Activated B cell treated with CpG ODN at 0.5 μM for 24 hours (primary cell): ENCODE measurements at regions of chr1 and their contacts with region 1.

Region 1: GRCh38 chr1:155208541-155209311 is at the start of gene MTX1:
- DNase-seq: peak; percentile 85
- ATAC-seq: peak; percentile 81
- H3K4me3 Mint-ChIP-seq: peak within 1 kb of the TSS; percentile 85
- H3K27ac Mint-ChIP-seq: peak within 1 kb of the TSS; percentile 91
- H3K4me1 Mint-ChIP-seq: peaks cover 20% of the 10 kb centered on the region
- H3K27me3 Mint-ChIP-seq: no peaks in the 10 kb centered on the region
- CTCF ChIP-seq: no peak
- total RNA-seq, gene MTX1: 36.7 and 38.2 TPM in 2 replicates

Region 2: DNA sequence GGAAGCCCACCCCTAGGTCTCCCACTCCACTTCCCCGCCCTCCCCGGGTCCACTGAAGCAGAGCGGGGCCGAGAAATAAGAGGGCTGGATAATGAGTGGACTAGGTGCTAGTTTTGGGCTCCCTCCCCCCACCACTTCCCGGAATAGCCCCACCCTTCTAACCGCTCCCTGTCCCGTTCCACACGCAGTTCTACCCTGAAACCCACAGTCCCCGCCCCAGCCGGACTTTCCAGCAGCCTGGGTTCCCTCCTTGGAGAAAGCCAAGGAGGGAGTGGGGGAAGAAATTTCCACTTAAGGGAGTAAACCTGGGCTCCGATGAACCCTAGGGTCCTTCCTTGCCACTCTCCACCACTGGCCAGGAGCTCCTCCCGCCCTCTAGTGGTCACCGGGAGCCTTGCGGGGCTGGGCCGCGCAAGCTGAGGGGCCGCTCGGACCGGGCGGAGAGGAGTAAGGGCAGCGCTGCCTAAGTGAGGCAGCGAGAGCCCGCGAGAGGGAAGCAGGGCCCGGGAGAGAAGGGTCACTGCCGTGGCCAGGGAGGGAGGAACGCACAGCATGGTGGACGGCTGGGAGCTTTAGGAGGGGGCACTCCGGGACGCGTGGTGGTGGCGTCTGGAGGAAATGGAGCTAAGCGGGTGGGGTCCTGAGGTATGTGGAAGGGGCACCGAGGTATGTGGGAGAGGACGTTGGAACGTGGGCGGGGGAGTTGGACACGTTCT is 15.3 kb before region 1 on chr1:
- CTCF ChIA-PET with region 1: interaction called, 14 read pairs
- POLR2A ChIA-PET with region 1: interaction called, 24 read pairs
- intact Hi-C with region 1: loop called (anchors 2 kb)
- DNase-seq: peak; percentile 81
- ATAC-seq: peak; percentile 73
- H3K4me3 Mint-ChIP-seq: peak overlapping the region; percentile 88
- H3K27ac Mint-ChIP-seq: peak overlapping the region; percentile 84
- H3K4me1 Mint-ChIP-seq: peaks cover 28% of the 10 kb centered on the region
- H3K27me3 Mint-ChIP-seq: no peaks in the 10 kb centered on the region
- CTCF ChIP-seq: peak; percentile 63

Region 3: GRCh38 chr1:155227261-155228095 is 18.8 kb after region 1 on chr1:
- CTCF ChIA-PET with region 1: interaction called, 110 read pairs
- POLR2A ChIA-PET with region 1: interaction called, 75 read pairs
- intact Hi-C with region 1: loop called (anchors 1 kb)
- DNase-seq: peak; percentile 90
- ATAC-seq: peak; percentile 96
- H3K4me3 Mint-ChIP-seq: peak overlapping the region; percentile 88
- H3K27ac Mint-ChIP-seq: peak overlapping the region; percentile 87
- H3K4me1 Mint-ChIP-seq: peaks cover 43% of the 10 kb centered on the region
- H3K27me3 Mint-ChIP-seq: no peaks in the 10 kb centered on the region
- CTCF ChIP-seq: no peak

Region 4: DNA sequence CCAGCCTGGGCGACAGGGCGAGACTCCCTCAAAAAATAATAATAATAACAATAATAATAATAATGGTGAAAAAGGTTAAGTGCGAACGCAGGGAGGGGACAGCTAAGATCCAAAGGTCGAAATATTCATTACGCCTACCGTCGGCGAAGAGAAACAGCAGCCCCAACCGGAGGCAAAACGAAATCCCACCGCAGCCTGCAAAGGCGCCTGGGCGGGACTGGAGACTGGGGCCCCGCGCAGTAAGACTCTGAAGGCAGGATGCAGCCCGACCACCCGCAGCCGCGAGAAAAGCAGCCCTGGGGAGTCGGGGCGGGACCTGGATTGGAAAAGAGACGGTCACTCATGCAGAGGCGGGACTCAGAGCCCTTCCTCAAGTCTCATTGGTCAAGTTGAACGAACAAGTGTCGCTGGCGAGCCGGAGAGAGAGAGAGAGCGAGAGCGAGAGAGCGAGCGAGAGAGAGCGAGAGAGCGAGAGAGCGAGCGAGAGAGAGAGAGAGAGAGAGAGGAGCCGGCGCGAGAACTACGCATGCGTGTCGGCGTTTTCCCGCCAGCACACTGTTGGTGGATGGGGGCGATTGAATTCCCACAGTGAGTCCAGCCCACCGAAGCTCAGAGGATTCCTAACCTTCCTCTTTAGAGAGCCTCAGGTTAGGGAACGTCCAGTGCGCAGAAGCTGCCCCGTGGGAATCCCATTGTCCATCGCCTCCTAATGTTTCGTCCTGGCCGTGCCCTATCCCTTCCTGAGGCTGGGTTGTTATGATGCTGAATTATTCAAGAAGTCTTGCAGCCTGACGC is 35.8 kb after region 1 on chr1:
- CTCF ChIA-PET with region 1: interaction called, 21 read pairs
- POLR2A ChIA-PET with region 1: interaction called, 11 read pairs
- intact Hi-C with region 1: loop called (anchors 1 kb)
- DNase-seq: peak; percentile 87
- ATAC-seq: peak; percentile 97
- H3K4me3 Mint-ChIP-seq: peak overlapping the region; percentile 85
- H3K27ac Mint-ChIP-seq: peak overlapping the region; percentile 96
- H3K4me1 Mint-ChIP-seq: peaks cover 39% of the 10 kb centered on the region
- H3K27me3 Mint-ChIP-seq: peaks cover 2% of the 10 kb centered on the region
- CTCF ChIP-seq: no peak

Region 5: GRCh38 chr1:155261852-155262673 is 53.3 kb after region 1 on chr1 and contains the start of gene SCAMP3:
- CTCF ChIA-PET with region 1: no interaction called
- POLR2A ChIA-PET with region 1: no interaction called
- intact Hi-C with region 1: loop called (anchors 5 kb)
- DNase-seq: peak; percentile 71
- ATAC-seq: peak; percentile 95
- H3K4me3 Mint-ChIP-seq: peak within 1 kb of the TSS; percentile 98
- H3K27ac Mint-ChIP-seq: peak within 1 kb of the TSS; percentile 92
- H3K4me1 Mint-ChIP-seq: peaks cover 33% of the 10 kb centered on the region
- H3K27me3 Mint-ChIP-seq: no peaks in the 10 kb centered on the region
- CTCF ChIP-seq: no peak
- total RNA-seq, gene SCAMP3: 71.8 and 78.6 TPM in 2 replicates

Region 6: GRCh38 chr1:155295183-155295941 is 86.6 kb after region 1 on chr1:
- CTCF ChIA-PET with region 1: no interaction called
- POLR2A ChIA-PET with region 1: no interaction called
- intact Hi-C with region 1: no loop called
- DNase-seq: no peak
- ATAC-seq: no peak
- H3K4me3 Mint-ChIP-seq: no peak overlapping the region
- H3K27ac Mint-ChIP-seq: no peak overlapping the region
- H3K4me1 Mint-ChIP-seq: peaks cover 6% of the 10 kb centered on the region
- H3K27me3 Mint-ChIP-seq: peaks cover 36% of the 10 kb centered on the region
- CTCF ChIP-seq: no peak